AG04450 (cell line): ENCODE measurements at regions of chr15 and their contacts with region 1.

Region 1: DNA sequence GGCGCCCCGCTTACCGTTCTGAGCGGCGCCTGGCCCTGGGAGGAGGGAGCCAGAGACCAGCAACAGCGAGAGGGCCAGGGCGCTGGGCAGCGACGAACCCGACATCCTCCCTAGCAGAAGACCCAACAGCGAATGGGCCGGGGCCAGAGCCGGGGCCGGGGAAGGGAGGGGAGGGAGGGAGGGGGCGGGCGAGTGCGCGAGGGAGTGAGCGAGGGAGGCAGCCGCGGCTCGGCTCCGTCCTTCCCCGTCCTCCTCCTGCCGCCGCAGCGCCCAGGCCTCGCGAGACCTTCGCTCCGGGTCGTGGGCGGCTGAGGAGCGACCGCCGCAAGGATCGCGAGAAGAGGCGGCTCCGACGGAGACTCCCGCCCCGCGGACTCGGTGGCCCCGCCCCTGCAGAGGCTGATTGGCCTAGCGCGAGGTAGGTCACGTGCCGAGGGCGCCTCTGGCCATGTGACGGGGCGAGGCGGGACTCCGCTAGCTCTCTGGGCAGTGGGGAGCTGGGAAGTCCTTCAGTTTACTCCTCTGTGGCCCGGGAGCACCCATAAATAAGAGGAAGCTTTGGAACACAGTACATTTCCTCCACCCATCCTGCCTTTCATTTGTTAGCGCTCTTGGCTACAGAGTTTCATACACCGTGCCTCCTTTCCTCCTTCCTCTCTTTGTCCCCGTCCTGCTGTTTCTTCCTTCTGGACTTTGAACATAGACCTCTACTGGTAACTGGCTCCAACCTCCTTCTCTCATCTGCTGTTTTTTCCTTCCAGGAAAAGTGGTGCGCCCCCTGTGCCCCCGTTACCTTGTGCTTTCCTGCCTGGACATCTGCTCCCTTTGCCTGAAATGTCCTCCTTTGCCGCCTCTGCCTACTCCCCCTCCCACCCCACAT is at the start of gene NPTN:
- DNase-seq: peak; percentile 93
- H3K4me3 ChIP-seq: peak within 1 kb of the TSS; percentile 64
- H3K27ac ChIP-seq: peak within 1 kb of the TSS; percentile 91
- H3K27me3 ChIP-seq: peaks cover 2% of the 10 kb centered on the region
- CTCF ChIP-seq: peak; percentile 16; the same call in 1 of the 2 replicates
- polyA plus RNA-seq, gene NPTN: 195 and 197 TPM in 2 replicates

Region 2: GRCh38 chr15:73305331-73306211 is 327.8 kb before region 1 on chr15:
- CTCF ChIA-PET with region 1: interaction called, 17 read pairs
- POLR2A ChIA-PET with region 1: no interaction called
- DNase-seq: peak; percentile 13
- H3K4me3 ChIP-seq: no peak overlapping the region
- H3K27ac ChIP-seq: no peak overlapping the region
- H3K27me3 ChIP-seq: peaks cover 3% of the 10 kb centered on the region
- CTCF ChIP-seq: peak; percentile 65

Region 3: GRCh38 chr15:73550190-73550589 is 83.2 kb before region 1 on chr15:
- CTCF ChIA-PET with region 1: interaction called, 26 read pairs
- POLR2A ChIA-PET with region 1: no interaction called
- DNase-seq: no peak
- H3K4me3 ChIP-seq: no peak overlapping the region
- H3K27ac ChIP-seq: no peak overlapping the region
- H3K27me3 ChIP-seq: no peaks in the 10 kb centered on the region
- CTCF ChIP-seq: no peak

Region 4: GRCh38 chr15:73596174-73596573 is 37.2 kb before region 1 on chr15:
- CTCF ChIA-PET with region 1: interaction called, 12 read pairs
- POLR2A ChIA-PET with region 1: interaction called, 8 read pairs
- DNase-seq: no peak
- H3K4me3 ChIP-seq: no peak overlapping the region
- H3K27ac ChIP-seq: no peak overlapping the region
- H3K27me3 ChIP-seq: no peaks in the 10 kb centered on the region
- CTCF ChIP-seq: no peak

Region 5: DNA sequence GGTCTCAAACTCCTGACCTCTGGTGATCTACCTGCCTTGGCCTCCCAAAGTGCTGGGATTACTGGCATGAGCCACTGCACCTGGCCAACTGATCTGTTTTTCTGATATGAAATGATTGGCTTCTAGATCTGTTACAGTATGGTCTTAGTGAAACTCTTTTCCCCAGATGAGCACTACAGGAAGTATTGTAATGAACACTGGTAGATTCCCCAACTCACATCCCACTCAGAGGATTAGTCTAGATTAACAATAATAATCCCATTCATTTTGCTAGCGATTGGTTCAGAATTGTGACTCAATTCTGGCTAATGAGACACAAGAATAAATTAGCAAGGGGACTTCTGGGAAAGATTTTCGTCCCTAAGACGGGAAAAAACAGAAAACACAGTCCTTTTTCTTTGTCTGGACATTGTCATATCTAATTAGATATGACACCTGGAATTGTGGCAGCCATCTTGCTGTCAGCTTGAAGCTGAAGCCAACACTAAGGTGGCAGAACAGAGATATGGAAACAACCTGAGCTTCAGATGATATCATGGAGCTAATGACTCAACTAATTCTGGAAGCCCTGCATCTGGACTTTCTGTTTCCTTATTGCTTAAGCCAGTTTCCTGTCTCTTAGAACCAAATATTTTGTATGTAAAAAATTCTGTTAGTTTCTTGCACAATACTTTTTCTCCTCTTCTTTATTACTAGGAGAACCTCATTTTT is 17.2 kb after region 1 on chr15:
- CTCF ChIA-PET with region 1: interaction called, 112 read pairs
- POLR2A ChIA-PET with region 1: no interaction called
- DNase-seq: no peak
- H3K4me3 ChIP-seq: no peak overlapping the region
- H3K27ac ChIP-seq: no peak overlapping the region
- H3K27me3 ChIP-seq: peaks cover 5% of the 10 kb centered on the region
- CTCF ChIP-seq: no peak

Region 6: GRCh38 chr15:73691396-73691795 is 58.0 kb after region 1 on chr15:
- CTCF ChIA-PET with region 1: interaction called, 304 read pairs
- POLR2A ChIA-PET with region 1: interaction called, 5 read pairs
- DNase-seq: no peak
- H3K4me3 ChIP-seq: no peak overlapping the region
- H3K27ac ChIP-seq: no peak overlapping the region
- H3K27me3 ChIP-seq: no peaks in the 10 kb centered on the region
- CTCF ChIP-seq: 0 out of 2 replicates have a peak, but pooled peaks have one; percentile 6

Region 7: DNA sequence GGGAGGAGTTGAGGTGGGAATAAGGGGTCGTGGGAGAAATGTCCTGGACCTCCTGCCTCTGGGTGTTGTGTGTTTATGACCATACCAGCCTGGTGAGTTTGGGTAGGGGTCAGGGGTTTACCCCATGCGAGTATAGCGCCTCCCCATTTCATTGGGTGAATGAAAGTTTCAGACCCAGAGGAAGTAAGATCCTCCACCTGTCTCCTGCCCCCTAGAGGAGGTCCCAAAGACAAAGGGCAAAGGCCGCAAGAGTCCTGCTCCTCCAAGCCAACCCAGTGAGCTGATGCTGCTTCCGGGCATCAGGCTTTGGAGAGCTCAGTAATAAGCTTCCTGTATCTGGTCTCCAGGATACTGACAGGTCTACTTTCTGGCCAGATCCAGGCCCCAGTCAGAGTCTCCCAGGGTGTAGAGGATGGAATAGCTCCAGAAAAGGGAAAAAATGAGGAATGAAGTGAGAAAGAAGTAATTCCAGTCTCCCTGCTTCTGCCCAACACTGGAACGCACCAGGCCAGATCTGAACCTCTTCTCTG is 233.6 kb after region 1 on chr15:
- CTCF ChIA-PET with region 1: no interaction called
- POLR2A ChIA-PET with region 1: no interaction called
- DNase-seq: no peak
- H3K4me3 ChIP-seq: no peak overlapping the region
- H3K27ac ChIP-seq: no peak overlapping the region
- H3K27me3 ChIP-seq: peaks cover 47% of the 10 kb centered on the region
- CTCF ChIP-seq: no peak